Activated CD4-positive, alpha-beta memory T cell treated with anti-CD3 and anti-CD28 coated beads for 36 hours (primary cell): ENCODE measurements at regions of chr16 and their contacts with region 1.

Region 1: GRCh38 chr16:8797364-8798173 is at the starts of genes PMM2 and TMEM186:
- DNase-seq: peak; percentile 97
- H3K4me3 Mint-ChIP-seq: peak within 1 kb of the TSS; percentile 92
- H3K27ac Mint-ChIP-seq: peak within 1 kb of the TSS; percentile 88
- H3K4me1 Mint-ChIP-seq: peaks cover 50% of the 10 kb centered on the region
- H3K27me3 Mint-ChIP-seq: no peaks in the 10 kb centered on the region
- total RNA-seq, gene PMM2: 34.0 to 36.0 TPM
- total RNA-seq, gene TMEM186: 16.0 TPM

Region 2: DNA sequence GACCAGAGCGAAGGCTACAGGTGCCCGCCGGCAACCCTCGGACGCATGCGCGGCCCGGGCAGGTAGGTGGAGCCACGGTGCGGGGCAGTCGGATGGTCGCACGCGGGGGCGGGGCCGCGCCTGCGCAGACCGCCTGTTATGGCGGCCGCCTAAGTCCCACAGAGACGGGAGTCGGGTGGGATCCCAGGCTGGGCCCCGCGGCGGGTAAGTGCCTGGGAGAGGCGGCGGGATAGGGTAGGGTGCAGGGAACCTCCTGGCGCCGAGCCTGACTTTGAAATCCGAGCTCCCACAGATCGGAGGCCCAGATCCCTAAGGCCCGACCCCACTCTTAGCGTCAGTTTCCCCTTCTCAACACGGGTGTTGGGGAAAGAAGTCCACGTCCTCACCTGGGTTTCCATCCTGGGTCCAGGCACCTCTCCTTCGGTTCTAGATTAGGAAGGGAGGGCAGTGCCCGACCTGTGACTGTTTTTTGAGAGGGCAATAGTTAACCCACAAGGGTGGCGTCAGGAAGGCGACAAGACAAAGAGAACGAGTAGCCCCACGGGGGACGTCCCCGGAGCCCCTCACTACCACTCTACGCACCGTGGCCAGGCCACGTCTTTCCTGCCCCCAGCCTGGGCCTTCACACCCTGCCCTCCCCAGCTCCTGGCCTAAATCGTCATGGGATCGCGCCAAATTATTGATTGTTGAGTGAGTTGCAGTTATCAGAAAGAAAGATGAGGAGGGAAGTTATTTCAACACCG is 175.8 kb before region 1 on chr16 and contains the start of gene METTL22:
- CTCF ChIA-PET with region 1: no interaction called
- POLR2A ChIA-PET with region 1: interaction called, 5 read pairs
- intact Hi-C with region 1: loop called (anchors 1 kb)
- DNase-seq: peak; percentile 93
- H3K4me3 Mint-ChIP-seq: peak within 1 kb of the TSS; percentile 93
- H3K27ac Mint-ChIP-seq: peak within 1 kb of the TSS; percentile 51
- H3K4me1 Mint-ChIP-seq: peaks cover 29% of the 10 kb centered on the region
- H3K27me3 Mint-ChIP-seq: no peaks in the 10 kb centered on the region
- total RNA-seq, gene METTL22: 26.4 to 30.8 TPM

Region 3: GRCh38 chr16:8660841-8661301 is 136.7 kb before region 1 on chr16:
- CTCF ChIA-PET with region 1: interaction called, 11 read pairs
- POLR2A ChIA-PET with region 1: no interaction called
- intact Hi-C with region 1: loop called (anchors 1 kb)
- DNase-seq: peak; percentile 76
- H3K4me3 Mint-ChIP-seq: no peak overlapping the region
- H3K27ac Mint-ChIP-seq: no peak overlapping the region
- H3K4me1 Mint-ChIP-seq: peaks cover 4% of the 10 kb centered on the region
- H3K27me3 Mint-ChIP-seq: no peaks in the 10 kb centered on the region

Region 4: GRCh38 chr16:8963825-8964441 is 166.4 kb after region 1 on chr16 and contains the start of gene USP7:
- CTCF ChIA-PET with region 1: no interaction called
- POLR2A ChIA-PET with region 1: no interaction called
- intact Hi-C with region 1: loop called (anchors 1 kb)
- DNase-seq: peak; percentile 94
- H3K4me3 Mint-ChIP-seq: peak within 1 kb of the TSS; percentile 84
- H3K27ac Mint-ChIP-seq: peak within 1 kb of the TSS; percentile 94
- H3K4me1 Mint-ChIP-seq: peaks cover 37% of the 10 kb centered on the region
- H3K27me3 Mint-ChIP-seq: peaks cover 2% of the 10 kb centered on the region
- total RNA-seq, gene USP7: 154 to 170 TPM

Region 5: GRCh38 chr16:9415548-9415947 is 618.0 kb after region 1 on chr16:
- CTCF ChIA-PET with region 1: no interaction called
- POLR2A ChIA-PET with region 1: no interaction called
- intact Hi-C with region 1: no loop called
- DNase-seq: no peak
- H3K4me3 Mint-ChIP-seq: no peak overlapping the region
- H3K27ac Mint-ChIP-seq: no peak overlapping the region
- H3K4me1 Mint-ChIP-seq: no peaks in the 10 kb centered on the region
- H3K27me3 Mint-ChIP-seq: no peaks in the 10 kb centered on the region